Endothelial cell of umbilical vein (primary cell): ENCODE measurements at regions of chr13 and their contacts with region 1.

Region 1: GRCh38 chr13:49300739-49301589 is 53.2 kb downstream of the CDADC1 start:
- DNase-seq: peak; percentile 70
- H3K4me3 ChIP-seq: peak overlapping the region in 1 of 3 experiments; percentile 11
- H3K27ac ChIP-seq: no peak overlapping the region
- H3K4me1 ChIP-seq: peaks cover 7% of the 10 kb centered on the region
- H3K27me3 ChIP-seq: no peaks in the 10 kb centered on the region
- CTCF ChIP-seq: peak; percentile 76 to 87
- POLR2A ChIP-seq: no peak

Region 2: GRCh38 chr13:49132479-49133002 is 168.4 kb before region 1 on chr13:
- CTCF ChIA-PET with region 1: no interaction called
- POLR2A ChIA-PET with region 1: no interaction called
- dilution Hi-C with region 1: no loop called
- intact Hi-C with region 1: no loop called
- DNase-seq: no peak
- H3K4me3 ChIP-seq: no peak overlapping the region
- H3K27ac ChIP-seq: no peak overlapping the region
- H3K4me1 ChIP-seq: no peaks in the 10 kb centered on the region
- H3K27me3 ChIP-seq: no peaks in the 10 kb centered on the region
- CTCF ChIP-seq: no peak
- POLR2A ChIP-seq: no peak

Region 3: DNA sequence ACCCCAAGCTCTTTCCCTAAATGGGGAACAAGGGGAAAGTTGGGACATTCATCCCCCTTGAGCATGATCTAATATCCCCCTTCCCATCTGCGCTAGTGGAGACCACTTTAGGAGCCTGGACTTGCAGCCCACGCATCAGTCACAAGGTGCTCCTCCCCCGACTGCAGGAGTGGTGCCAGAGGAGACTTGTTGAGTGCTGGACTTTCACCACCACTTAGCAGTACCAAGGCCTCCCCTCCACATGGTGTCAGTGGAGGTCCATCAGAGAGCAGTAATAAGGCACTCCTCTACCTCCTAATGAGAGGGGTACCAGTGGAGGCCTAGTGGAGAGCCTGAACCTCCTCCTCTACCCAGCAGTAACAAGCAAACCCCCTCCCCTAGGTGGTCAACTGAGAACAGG is 120.4 kb after region 1 on chr13:
- CTCF ChIA-PET with region 1: no interaction called
- POLR2A ChIA-PET with region 1: no interaction called
- dilution Hi-C with region 1: no loop called
- intact Hi-C with region 1: no loop called
- DNase-seq: peak; percentile 3
- H3K4me3 ChIP-seq: no peak overlapping the region
- H3K27ac ChIP-seq: no peak overlapping the region
- H3K4me1 ChIP-seq: no peaks in the 10 kb centered on the region
- H3K27me3 ChIP-seq: no peaks in the 10 kb centered on the region
- CTCF ChIP-seq: peak; percentile 11 to 19
- POLR2A ChIP-seq: no peak

Region 4: DNA sequence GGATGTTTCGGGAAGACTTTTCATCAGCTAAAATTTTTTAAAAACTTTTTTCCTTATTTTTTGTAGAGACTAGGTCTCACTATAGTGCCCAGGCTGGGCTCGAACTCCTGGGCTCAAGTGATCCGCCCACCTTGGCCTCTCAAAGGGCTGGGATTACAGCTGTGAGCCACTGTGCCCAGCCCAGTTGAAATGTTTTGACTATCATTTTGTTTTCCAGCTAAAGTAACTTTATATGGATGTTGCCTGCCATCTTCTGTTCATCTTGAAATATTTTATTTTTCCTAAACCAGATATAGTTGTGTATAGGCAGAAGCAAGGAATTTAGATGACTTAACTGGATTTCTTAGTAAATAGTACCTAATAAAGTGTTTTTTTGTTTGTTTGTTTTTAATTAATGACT is 135.9 kb after region 1 on chr13:
- CTCF ChIA-PET with region 1: interaction called, 8 read pairs
- POLR2A ChIA-PET with region 1: no interaction called
- dilution Hi-C with region 1: no loop called
- intact Hi-C with region 1: loop called (anchors 1 kb)
- DNase-seq: no peak
- H3K4me3 ChIP-seq: no peak overlapping the region
- H3K27ac ChIP-seq: no peak overlapping the region
- H3K4me1 ChIP-seq: peaks cover 4% of the 10 kb centered on the region
- H3K27me3 ChIP-seq: no peaks in the 10 kb centered on the region
- CTCF ChIP-seq: no peak
- POLR2A ChIP-seq: no peak

Region 5: GRCh38 chr13:49517461-49517860 is 216.5 kb after region 1 on chr13:
- CTCF ChIA-PET with region 1: no interaction called
- POLR2A ChIA-PET with region 1: no interaction called
- dilution Hi-C with region 1: no loop called
- intact Hi-C with region 1: loop called (anchors 2 kb)
- DNase-seq: no peak
- H3K4me3 ChIP-seq: no peak overlapping the region
- H3K27ac ChIP-seq: no peak overlapping the region
- H3K4me1 ChIP-seq: no peaks in the 10 kb centered on the region
- H3K27me3 ChIP-seq: no peaks in the 10 kb centered on the region
- CTCF ChIP-seq: peak in 1 of 2 donors; percentile 44
- POLR2A ChIP-seq: no peak

Region 6: DNA sequence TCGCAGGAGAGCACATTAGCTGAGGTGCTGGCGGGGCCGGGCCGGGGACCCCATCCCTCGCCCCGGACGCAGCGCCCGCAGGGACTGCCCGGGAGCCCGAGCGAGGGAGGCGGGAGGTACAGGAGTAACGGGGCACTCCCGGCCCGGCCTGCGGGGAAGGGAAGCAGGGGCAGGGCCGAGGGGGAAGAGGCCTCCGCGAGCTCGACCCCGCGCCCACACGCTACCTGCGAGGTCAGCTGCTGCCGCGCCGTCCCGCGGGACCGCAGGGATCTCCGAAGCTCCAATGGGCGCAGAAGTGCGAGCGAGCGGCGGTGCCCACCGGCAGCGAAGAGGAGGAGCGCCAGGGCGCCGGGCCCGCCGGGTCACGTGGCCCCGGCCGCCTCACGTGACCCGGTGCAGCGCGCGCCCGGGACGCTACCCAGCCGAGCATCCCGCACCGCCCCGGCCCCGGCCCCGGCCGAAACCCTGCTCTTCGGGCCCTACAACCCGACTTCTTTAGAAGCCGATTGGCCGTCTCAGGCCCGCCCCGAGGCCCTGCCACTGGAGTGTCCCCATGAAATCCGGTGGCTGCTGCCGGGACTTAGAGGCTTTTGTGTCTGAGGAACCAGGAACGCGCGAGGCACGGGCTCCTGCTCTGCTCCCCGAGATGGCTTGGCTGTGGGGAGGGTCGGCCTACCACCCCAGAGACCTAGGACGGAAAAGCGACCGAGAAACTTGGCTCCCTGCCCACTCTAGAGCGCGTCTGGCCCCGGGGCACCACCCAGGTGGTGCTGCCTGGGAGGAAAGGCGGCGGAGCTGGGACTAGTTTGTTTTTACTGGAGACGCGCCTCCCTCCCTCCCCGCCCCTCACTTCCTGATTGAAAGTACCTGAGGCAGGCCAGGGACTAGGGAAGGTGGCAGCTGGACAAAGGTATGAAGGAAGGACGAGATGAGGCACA is 284.5 kb after region 1 on chr13 and contains the start of gene RCBTB1:
- CTCF ChIA-PET with region 1: no interaction called
- POLR2A ChIA-PET with region 1: no interaction called
- dilution Hi-C with region 1: no loop called
- intact Hi-C with region 1: loop called (anchors 5 kb)
- DNase-seq: peak; percentile 69
- H3K4me3 ChIP-seq: peak within 1 kb of the TSS; percentile 85 to 94 (median 89)
- H3K27ac ChIP-seq: peak within 1 kb of the TSS; percentile 64
- H3K4me1 ChIP-seq: peaks cover 16% of the 10 kb centered on the region
- H3K27me3 ChIP-seq: no peaks in the 10 kb centered on the region
- CTCF ChIP-seq: no peak
- POLR2A ChIP-seq: peak; percentile 69
- total RNA-seq, gene RCBTB1: 23.6 and 23.8 TPM in 2 replicates